HEK293 (cell line): ENCODE measurements at regions of chr4 and their contacts with region 1.

Region 1: GRCh38 chr4:78517050-78517652 is 34.4 kb upstream of the ANXA3 start:
- H3K4me3 ChIP-seq: no peak overlapping the region
- H3K27ac ChIP-seq: no peak overlapping the region
- H3K4me1 ChIP-seq: no peaks in the 10 kb centered on the region
- CTCF ChIP-seq: no peak

Region 2: DNA sequence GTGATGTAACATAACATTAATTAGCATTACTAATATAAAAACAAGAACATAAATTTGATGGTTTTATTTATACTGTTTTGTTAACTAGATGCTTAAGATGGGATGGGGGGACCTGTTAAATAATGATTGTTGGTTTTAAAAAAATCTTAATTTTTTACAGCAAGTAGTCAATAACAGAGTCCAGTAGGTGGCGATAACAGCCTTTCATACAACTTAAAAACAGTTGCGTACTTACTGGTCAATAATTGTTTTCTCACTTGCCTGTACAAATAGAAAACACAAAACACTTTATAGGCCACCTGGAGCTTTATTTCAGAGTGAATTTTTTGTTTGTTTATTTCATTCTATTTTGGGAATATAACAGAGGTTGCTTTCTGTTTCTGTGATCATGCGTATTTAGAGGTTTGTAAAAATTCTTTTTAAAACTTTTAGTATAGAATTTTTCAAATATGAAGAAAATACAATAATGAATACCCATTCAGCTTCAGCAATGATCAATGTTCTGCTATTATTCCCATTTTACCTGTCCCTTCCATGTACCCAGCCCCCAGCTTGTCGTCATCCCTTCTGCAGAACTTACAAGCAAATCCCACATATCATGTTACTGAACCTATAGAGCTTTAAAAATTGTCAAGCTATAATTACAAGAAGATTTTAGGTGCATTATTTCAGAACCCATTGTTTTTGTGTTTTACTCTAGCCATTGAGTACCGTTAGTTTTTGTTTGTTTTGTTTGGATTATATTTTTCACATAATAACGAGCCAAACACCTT is 557.4 kb before region 1 on chr4:
- CTCF ChIA-PET with region 1: interaction called, 17 read pairs
- POLR2A ChIA-PET with region 1: no interaction called
- H3K4me3 ChIP-seq: no peak overlapping the region
- H3K27ac ChIP-seq: no peak overlapping the region
- H3K4me1 ChIP-seq: no peaks in the 10 kb centered on the region
- CTCF ChIP-seq: 0 out of 2 replicates have a peak, but pooled peaks have one; percentile 14

Region 3: DNA sequence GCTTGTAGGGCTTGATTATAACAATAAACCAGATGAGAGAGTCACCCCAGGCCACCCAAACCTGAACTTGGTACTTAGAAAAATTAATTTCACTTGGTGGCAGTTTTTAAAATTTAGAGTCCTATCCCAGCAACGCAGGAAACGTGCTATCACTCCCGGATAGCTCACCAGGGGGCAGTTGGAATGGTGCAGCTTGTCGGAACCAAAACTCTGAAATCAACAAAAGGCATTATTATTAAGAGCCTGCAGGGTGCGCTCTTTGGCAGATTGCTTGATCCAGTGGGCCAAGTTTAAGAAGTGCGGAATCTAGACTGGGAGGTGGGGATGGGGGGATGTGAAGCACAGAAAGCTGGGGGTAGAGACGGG is 457.6 kb before region 1 on chr4:
- CTCF ChIA-PET with region 1: interaction called, 10 read pairs
- POLR2A ChIA-PET with region 1: no interaction called
- H3K4me3 ChIP-seq: peak overlapping the region; percentile 71
- H3K27ac ChIP-seq: peak overlapping the region; percentile 86; the same call in 1 of the 2 replicates
- H3K4me1 ChIP-seq: peaks cover 7% of the 10 kb centered on the region
- CTCF ChIP-seq: no peak